Right cardiac atrium (tissue), 5 donors: ENCODE measurements at regions of chr9 and their contacts with region 1.

Region 1: DNA sequence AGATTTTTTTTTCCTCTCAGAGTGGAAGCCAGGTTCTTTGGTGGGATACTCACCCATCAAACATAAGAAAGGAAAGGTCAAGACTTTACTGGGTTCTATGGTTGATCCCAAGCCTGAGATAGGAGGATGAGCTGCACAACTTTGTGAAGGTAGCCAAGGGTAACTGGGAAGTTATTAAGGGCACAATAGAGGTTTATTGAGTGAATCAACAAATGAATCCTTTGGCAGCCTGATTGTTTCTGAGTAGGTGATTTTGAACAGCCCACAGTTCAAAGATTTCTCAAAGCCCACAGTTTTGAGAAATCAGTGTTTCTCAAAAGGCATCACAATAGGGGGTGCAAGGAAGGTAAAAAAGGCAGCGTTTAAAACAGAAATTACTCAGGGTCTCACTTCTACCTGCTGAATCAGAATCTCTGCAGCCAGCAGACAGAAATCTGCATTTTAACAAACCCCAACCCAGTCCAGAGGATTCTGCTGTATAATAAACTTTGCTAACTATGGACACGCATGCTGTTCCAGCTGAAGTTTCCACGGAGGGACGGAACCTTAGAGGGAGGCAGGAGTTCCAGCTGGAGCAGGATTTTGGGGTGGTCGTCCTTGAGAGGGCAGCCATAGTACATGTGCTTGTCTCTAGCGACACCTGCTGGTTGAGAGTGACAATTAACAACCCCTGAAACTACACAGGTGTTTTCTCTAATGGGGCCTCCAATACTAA is 32.7 kb upstream of the FSD1L start:
- DNase-seq: peak in 2 of 3 donors; percentile 36 to 39
- ATAC-seq: peak; percentile 77 to 82
- H3K4me3 ChIP-seq: no peak overlapping the region
- H3K27ac ChIP-seq: no peak overlapping the region
- H3K4me1 ChIP-seq: no peaks in the 10 kb centered on the region
- H3K27me3 ChIP-seq: no peaks in the 10 kb centered on the region

Region 2: GRCh38 chr9:104863180-104863883 is 551.8 kb before region 1 on chr9:
- intact Hi-C with region 1: loop called (anchors 5 to 10 kb)
- DNase-seq: peak in 2 of 3 donors; percentile 34 to 66
- ATAC-seq: peak; percentile 75 to 84
- H3K4me3 ChIP-seq: no peak overlapping the region
- H3K27ac ChIP-seq: no peak overlapping the region
- H3K4me1 ChIP-seq: no peaks in the 10 kb centered on the region
- H3K27me3 ChIP-seq: no peaks in the 10 kb centered on the region

Region 3: GRCh38 chr9:104868687-104869404 is 546.3 kb before region 1 on chr9:
- intact Hi-C with region 1: loop called (anchors 5 to 10 kb)
- DNase-seq: peak; percentile 62 to 82 (median 78)
- ATAC-seq: peak; percentile 89 to 92
- H3K4me3 ChIP-seq: no peak overlapping the region
- H3K27ac ChIP-seq: peak overlapping the region; percentile 15
- H3K4me1 ChIP-seq: peaks cover 5% of the 10 kb centered on the region
- H3K27me3 ChIP-seq: no peaks in the 10 kb centered on the region

Region 4: DNA sequence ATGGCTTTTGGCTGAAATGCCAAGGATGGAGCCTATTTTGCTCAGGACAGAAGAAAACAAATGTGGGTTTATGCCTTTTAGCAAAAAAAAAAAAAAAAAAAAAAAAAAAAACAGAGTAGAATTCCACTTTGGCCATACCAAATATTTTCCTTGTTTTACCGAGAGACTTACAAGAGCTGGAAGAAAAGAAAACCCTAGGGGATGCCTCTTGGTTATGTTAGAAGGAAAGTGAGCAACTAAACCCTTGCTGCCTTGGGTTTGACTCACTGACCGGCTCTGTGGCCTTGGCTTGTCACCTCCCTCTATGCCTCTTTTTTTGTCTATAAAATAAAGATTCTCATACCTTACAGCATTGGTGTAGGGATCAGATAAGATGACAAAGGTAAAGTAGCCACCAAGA is 417.6 kb before region 1 on chr9:
- intact Hi-C with region 1: no loop called
- DNase-seq: no peak
- ATAC-seq: no peak
- H3K4me3 ChIP-seq: no peak overlapping the region
- H3K27ac ChIP-seq: no peak overlapping the region
- H3K4me1 ChIP-seq: peaks cover 2% of the 10 kb centered on the region
- H3K27me3 ChIP-seq: no peaks in the 10 kb centered on the region

Region 5: DNA sequence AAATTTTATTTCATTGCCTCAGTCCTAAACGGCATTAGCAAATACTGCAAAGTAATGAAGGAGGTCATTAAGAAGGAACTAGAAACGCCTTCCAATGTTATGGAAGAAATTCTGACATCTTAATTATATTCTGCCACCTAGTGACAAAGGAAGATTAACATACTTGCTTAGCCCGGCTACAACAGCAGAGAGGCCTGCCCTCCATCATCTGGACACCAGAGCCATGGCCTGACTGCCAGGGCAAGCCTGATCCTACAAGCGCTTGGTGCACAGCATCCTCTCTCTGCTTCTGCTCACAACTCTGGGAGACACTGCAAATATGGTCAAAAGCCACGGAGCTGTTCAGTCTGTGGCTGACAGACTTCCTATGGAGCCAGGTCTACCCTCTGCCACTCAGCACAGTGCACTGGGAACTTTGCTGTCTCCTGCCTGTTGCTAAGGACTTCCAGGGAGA is 257.9 kb before region 1 on chr9:
- intact Hi-C with region 1: loop called in 3 of 4 experiments (anchors 5 to 10 kb)
- DNase-seq: peak; percentile 51 to 77 (median 70)
- ATAC-seq: peak; percentile 91 to 94
- H3K4me3 ChIP-seq: no peak overlapping the region
- H3K27ac ChIP-seq: no peak overlapping the region
- H3K4me1 ChIP-seq: no peaks in the 10 kb centered on the region
- H3K27me3 ChIP-seq: no peaks in the 10 kb centered on the region